Gastrocnemius medialis (tissue), 4 donors: ENCODE measurements at regions of chr9 and their contacts with region 1.

Region 1: DNA sequence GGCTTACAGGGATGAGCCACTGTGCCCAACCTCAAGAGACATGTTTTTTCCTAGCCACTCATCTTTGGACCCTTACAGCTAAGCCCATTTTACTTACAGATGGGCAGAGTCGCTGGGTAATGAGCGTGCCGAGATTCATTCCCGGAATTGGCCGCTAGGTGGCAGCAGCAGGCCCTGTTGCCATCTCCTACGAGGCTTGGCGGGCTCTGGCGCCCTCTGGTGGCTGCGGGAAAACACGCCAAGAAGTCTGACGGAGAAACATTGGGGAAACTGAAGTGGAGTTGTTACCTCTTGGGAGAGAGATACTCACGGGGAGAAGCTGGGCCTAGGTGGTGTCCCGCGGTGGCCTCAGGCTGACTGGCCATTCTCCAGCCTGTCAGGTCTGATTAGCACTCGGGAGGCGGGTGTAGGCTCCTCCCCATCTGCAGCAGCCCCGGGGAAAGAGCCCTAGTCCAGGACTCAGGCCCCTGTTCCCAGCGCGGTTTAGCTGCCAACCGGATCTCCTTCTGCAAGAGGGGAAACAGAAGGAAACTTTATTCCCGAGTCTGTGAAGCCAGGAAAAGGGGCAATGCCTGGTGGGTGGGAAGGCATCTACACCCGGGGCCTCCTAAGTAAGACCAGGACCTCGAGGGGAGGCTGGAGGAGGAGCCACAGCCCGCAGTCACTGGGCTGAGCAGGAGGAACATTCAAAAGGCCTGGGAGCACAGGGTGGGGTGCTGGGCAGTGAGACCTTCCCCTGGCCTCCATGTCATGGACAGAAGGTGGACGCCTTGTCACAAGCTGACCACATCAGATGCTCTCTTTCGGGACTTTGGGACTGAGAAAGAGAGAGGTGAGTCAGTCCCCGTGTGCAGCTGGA is 9.7 kb downstream of the PTGES2 start:
- DNase-seq: peak; percentile 83 to 88
- ATAC-seq: peak; percentile 68 to 75
- H3K4me3 ChIP-seq: no peak overlapping the region
- H3K27ac ChIP-seq: peak overlapping the region in 1 of 4 donors; percentile 29
- H3K4me1 ChIP-seq: peaks cover 8 to 10% of the 10 kb centered on the region in 2 donors
- H3K27me3 ChIP-seq: no peaks in the 10 kb centered on the region
- CTCF ChIP-seq: peak; percentile 100
- POLR2A ChIP-seq: no peak

Region 2: DNA sequence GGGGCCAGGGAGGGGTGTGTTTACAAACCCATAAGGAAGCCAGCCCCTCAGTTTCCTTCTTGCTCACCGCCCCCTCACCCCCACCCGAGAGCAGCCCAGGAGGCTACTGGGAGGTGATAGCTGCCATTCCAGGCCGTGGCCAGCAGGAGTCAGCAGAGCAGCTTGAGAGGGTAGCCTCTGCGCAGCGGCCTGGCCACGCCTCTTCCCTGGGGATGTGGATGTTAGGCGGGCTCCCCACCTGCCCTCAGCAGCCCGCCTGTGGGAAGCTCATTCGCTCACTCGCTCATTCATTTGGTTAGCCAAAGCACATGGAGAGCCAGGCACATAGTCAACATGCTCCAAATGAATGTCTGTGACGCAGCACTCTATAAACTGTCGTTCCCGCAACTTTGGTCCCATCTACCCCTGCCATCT is 174.1 kb before region 1 on chr9:
- in situ Hi-C with region 1: no loop called
- intact Hi-C with region 1: loop called (anchors 5 kb)
- DNase-seq: peak; percentile 46 to 79
- ATAC-seq: peak; percentile 53 to 74
- H3K4me3 ChIP-seq: no peak overlapping the region
- H3K27ac ChIP-seq: no peak overlapping the region
- H3K4me1 ChIP-seq: peaks cover 7 to 12% of the 10 kb centered on the region in 2 donors
- H3K27me3 ChIP-seq: no peaks in the 10 kb centered on the region
- CTCF ChIP-seq: peak; percentile 75 to 90 (median 84)
- POLR2A ChIP-seq: no peak

Region 3: GRCh38 chr9:127955294-127956035 is 162.4 kb before region 1 on chr9:
- in situ Hi-C with region 1: loop called in 3 of 4 experiments (anchors 10 to 25 kb)
- intact Hi-C with region 1: no loop called
- DNase-seq: peak; percentile 96 to 99
- ATAC-seq: peak; percentile 96 to 99
- H3K4me3 ChIP-seq: peak overlapping the region in 1 of 4 donors; percentile 29
- H3K27ac ChIP-seq: peak overlapping the region; percentile 83 to 92 (median 90)
- H3K4me1 ChIP-seq: peaks cover 16 to 26% of the 10 kb centered on the region in 2 donors
- H3K27me3 ChIP-seq: no peaks in the 10 kb centered on the region
- CTCF ChIP-seq: peak; percentile 53 to 79 (median 69)
- POLR2A ChIP-seq: peak in 1 of 2 donors; percentile 58

Region 4: DNA sequence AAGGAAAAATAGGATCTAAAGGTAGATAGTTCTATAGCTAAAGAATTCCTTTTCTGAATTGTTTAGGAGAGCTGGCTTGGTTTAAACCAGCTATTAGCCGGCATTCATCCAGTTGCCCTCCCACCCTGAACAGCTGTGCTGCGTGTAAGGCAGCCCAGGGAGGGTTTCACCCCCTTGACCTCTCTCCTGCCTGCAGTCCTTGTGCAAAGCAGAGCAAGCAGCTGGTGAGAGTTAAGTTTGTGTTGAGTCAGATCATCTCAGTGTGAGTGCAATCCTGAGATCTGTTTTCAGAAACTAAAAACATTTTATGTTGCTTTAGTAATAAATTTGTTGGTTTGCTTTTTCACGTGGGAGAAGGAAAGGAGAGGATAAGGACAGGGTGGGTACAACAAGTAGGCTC is 36.8 kb before region 1 on chr9:
- in situ Hi-C with region 1: no loop called
- intact Hi-C with region 1: loop called (anchors 5 kb)
- DNase-seq: peak in 1 of 2 donors; percentile 68
- ATAC-seq: peak in 1 of 2 donors; percentile 57
- H3K4me3 ChIP-seq: no peak overlapping the region
- H3K27ac ChIP-seq: peak overlapping the region; percentile 64 to 83 (median 66)
- H3K4me1 ChIP-seq: peaks cover 27 to 41% of the 10 kb centered on the region in 2 donors
- H3K27me3 ChIP-seq: no peaks in the 10 kb centered on the region
- CTCF ChIP-seq: no peak
- POLR2A ChIP-seq: no peak

Region 5: DNA sequence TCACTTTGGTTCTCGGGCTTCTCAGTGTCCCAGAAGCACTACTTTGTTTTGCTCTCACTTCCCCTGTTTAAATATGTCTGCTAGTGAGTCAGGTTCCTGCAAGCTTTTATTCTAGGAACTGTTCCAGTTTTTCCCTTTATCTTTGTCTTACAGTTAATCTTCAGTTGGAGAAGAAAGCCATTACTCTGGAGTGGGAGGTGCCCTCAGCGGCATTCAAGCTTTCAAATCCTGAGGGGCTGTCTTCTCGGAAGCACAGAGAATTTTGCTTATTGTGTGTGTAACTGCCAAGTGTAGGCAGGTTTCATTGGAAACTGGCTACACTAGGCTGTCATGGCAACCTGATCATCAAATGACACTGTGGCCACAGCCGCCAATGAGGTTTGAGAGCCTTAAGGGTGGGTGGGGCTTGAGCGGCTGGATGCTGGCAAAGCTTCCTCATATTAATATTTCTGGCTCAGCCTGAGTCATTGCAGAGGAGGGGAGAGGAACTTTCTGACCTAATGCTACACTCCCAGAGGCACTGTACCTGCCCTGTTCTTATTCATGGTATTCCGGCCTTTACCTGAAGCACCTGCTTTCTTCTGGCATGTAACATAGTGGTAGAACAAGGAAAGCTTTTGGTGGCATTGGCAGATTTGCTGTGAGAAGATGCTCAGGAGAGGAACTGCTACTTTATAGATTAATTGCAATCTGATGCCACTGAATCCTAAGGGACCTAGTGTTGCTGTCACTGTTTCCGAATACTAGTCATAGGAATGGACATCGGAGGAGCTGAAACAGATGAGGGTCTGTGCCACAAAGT is 23.5 kb before region 1 on chr9:
- in situ Hi-C with region 1: no loop called
- intact Hi-C with region 1: loop called (anchors 2 kb)
- DNase-seq: peak; percentile 88 to 94
- ATAC-seq: peak; percentile 70 to 76
- H3K4me3 ChIP-seq: peak overlapping the region; percentile 6 to 33 (median 27)
- H3K27ac ChIP-seq: peak overlapping the region; percentile 72 to 83 (median 81)
- H3K4me1 ChIP-seq: peaks cover 57 to 59% of the 10 kb centered on the region in 2 donors
- H3K27me3 ChIP-seq: no peaks in the 10 kb centered on the region
- CTCF ChIP-seq: no peak
- POLR2A ChIP-seq: peak in 1 of 2 donors; percentile 87